ENCODE measurements at regions of chr5 and their contacts with region 1.

Region 1: DNA sequence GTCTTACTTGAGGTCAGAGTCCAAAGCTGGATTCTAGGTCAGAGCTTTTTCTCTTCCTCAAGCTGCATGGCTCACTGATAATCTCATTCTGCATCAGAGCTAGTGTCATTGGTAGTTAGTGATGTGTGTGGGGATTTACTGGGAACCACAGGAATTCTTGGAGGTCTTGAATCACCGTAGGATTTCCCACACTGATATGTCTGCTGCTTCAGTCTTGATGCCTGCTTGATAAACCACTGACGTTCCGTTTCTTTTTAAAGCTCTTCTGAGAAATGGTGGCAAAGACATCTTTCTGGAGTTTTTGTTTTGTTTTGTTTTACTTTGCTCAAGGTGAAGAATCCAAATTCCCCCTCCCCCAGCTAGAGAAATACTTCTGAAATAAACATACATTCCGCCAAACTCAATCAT is 1.2 kb upstream of the GARIN3 start:
- DNase-seq: no peak
- H3K4me3 ChIP-seq: no peak overlapping the region
- H3K27ac ChIP-seq: no peak overlapping the region
- H3K4me1 ChIP-seq: no peaks in the 10 kb centered on the region
- H3K27me3 ChIP-seq: peaks cover 0 to 9% of the 10 kb centered on the region in 2 donors
- CTCF ChIP-seq: no peak

Region 2: GRCh38 chr5:157378502-157378901 is 211.3 kb after region 1 on chr5:
- intact Hi-C with region 1: no loop called
- DNase-seq: no peak
- H3K4me3 ChIP-seq: no peak overlapping the region
- H3K27ac ChIP-seq: peak overlapping the region in 1 of 2 donors; percentile 92
- H3K4me1 ChIP-seq: peaks cover 0 to 56% (median 2%) of the 10 kb centered on the region in 4 donors
- H3K27me3 ChIP-seq: no peaks in the 10 kb centered on the region
- CTCF ChIP-seq: no peak

Region 3: DNA sequence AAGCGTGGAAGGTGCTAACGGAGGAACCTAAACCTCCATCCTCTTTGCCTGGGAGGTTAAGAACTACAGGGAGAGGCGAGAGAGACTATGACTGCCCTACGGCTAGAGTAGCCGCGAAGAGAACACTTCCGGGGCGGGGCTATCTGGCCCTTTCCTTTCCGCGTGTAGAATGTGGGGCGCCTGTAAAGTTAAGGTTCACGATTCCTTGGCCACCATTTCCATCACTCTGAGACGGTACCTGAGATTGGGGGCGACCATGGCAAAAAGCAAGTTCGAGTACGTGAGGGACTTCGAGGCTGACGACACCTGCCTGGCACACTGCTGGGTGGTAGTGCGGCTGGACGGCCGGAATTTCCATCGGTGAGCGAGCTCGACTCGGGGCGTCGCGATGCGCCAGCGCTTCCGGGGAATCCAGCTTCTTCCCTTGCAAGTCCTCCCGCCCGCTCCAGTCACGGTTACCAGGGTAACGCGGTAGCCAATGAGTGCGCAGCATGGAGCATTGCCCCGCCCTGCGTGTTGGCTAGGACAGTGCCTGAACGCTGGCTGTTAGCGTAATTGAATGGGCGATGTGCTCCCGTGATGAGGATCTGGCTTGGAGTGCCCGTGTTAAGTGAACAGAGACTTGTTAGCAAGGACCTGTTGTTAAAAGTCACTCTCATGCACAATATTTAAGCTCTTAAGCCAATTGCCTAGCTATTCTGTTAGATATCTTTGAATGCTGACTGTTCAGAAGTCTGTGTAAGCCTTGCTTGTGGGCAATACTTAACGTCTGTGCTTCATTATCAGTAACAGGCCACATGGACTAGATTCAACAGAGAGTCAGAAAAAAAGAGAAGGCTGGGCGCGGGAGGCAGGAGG is 564.3 kb after region 1 on chr5 and contains the start of gene THG1L:
- intact Hi-C with region 1: loop called (anchors 10 kb)
- DNase-seq: peak; percentile 99
- H3K4me3 ChIP-seq: peak within 1 kb of the TSS; percentile 64 to 82
- H3K27ac ChIP-seq: peak within 1 kb of the TSS; percentile 85 to 90
- H3K4me1 ChIP-seq: peaks cover 0 to 4% (median 2%) of the 10 kb centered on the region in 4 donors
- H3K27me3 ChIP-seq: no peaks in the 10 kb centered on the region
- CTCF ChIP-seq: no peak

Measured in tibial artery (tissue), 4 donors.